ENCODE measurements at regions of chr1 and their contacts with region 1.

Region 1: DNA sequence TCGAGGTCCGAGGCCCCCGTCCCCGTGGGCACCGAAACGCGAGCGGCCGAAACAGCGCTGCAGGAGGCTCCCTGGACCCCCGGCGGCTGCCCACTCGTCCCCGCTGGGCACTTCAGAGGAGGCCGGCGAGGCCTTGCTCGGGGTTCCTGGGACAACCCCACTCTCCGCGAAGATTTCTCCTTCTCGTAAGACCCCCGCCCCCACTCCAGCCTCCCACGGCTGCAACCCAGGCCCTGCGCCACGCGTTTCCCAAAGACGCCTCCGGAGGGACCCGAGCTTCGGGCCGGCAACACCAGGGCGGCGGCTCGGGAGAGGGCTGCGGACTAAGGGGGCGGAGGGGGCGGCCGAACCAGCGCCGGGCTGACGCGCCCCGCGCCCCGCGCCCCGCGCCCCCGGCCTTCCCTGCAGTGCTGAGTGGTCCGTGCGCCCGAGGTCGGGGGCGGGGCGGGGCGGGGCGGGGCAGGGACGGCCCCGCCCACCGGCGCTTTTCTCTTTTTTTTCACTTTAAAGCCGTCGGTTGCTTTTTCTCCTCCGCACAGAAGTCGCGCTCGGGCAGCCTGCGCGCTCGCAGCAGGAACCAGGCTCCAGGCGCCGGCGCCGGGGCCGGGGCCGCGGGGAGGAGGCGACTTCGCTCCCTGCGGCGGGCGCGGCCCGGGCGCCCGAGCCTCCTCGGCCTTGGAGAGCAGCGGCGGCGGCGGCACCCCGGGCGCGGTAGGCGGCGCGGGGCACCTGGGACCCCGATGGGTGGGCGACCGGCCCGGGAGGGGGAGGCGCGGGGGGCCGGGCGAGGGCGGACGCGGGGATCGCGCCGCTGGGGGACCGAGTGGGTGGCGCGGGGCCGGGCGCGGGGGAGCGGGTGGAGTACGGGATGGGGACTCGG is at the start of gene SPSB1:
- DNase-seq: peak; percentile 37 to 54
- H3K4me3 ChIP-seq: peak within 1 kb of the TSS; percentile 83
- H3K27ac ChIP-seq: peak within 1 kb of the TSS; percentile 60; the same call in 1 of the 2 replicates
- H3K4me1 ChIP-seq: peaks cover 42% of the 10 kb centered on the region
- H3K27me3 ChIP-seq: no peaks in the 10 kb centered on the region
- CTCF ChIP-seq: no peak
- total RNA-seq, gene SPSB1: 27.9 and 33.8 TPM in 2 replicates

Region 2: GRCh38 chr1:9350013-9350908 is 57.7 kb after region 1 on chr1:
- CTCF ChIA-PET with region 1: no interaction called
- POLR2A ChIA-PET with region 1: no interaction called
- intact Hi-C with region 1: loop called (anchors 5 kb)
- DNase-seq: peak in 1 of 2 experiments; percentile 17
- H3K4me3 ChIP-seq: no peak overlapping the region
- H3K27ac ChIP-seq: no peak overlapping the region
- H3K4me1 ChIP-seq: peaks cover 26% of the 10 kb centered on the region
- H3K27me3 ChIP-seq: no peaks in the 10 kb centered on the region
- CTCF ChIP-seq: no peak

Region 3: DNA sequence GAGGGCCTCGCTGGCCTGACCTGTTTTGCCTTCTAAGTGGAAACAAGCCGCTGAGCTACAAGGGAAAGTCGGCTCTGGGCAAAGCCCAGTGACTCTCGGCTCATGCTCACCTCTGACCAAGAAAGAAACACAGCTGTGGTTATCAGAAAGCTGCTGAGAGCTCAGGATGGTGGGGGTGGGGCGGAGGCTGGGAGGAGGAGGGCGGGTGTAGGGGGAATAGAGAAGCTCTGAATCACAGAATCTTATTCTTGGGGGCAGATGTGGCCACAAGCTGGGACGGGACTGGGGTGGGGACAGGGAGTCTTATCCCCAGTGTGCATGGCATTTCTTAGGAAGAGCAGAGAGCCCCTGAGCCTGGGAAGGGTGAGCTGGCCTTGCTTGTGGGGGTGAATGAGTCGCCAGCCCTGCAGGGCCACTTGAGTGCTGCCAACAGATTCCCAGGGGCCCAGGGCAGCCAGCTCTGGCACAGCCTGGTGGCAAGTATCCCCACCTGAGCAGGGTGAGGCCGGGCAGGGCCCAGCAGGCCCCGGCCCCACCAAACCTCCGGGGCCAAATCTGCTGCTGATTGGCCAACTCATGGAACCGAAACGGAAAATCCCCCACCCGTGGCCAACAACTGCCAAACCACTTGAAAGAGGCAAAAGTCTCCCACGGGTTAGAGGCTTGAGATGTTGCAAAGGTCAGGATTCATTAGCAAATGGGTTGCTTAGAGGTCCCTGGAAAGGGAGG is 120.7 kb after region 1 on chr1:
- CTCF ChIA-PET with region 1: no interaction called
- POLR2A ChIA-PET with region 1: no interaction called
- intact Hi-C with region 1: loop called (anchors 5 kb)
- DNase-seq: peak; percentile 78 to 83
- H3K4me3 ChIP-seq: 0 out of 2 replicates have a peak overlapping the region, but pooled peaks have one; percentile 14
- H3K27ac ChIP-seq: peak overlapping the region; percentile 91
- H3K4me1 ChIP-seq: peaks cover 32% of the 10 kb centered on the region
- H3K27me3 ChIP-seq: no peaks in the 10 kb centered on the region
- CTCF ChIP-seq: no peak

Region 4: DNA sequence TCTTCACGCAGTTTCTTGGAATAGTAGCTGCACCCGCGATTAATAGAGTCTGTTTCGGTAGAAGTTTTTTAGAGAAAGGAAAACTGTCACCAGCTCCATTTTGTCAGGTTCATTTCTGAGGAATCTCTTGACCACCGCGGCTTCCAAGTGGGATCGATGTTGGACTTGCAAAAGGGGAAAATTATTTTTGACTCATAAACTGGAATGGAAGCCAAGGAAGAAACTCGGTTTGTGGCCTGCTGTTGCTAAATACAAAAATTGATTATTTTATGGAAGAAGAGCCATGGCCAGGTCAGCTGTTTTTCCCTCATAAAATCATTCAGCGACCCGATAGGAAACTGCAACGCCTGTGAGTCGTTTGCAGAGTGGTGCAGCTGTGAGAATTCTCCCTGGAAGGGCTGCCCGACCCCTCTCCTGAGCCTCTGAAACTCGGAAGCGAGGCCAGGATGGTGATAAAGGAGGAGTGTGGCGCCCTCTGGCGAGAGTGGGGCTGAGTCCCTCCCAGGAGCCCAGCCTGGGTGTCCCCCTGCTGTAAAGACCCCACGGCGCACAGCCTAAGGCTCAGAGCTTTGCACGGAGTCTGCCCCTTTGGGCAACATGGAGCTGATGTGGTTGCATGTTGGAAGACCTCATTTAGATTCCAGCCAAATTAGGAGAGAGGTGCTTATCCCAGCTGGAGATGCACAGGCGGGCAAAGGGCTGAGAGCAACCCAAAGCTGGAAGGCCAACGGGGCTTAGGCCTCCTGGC is 163.1 kb after region 1 on chr1:
- CTCF ChIA-PET with region 1: no interaction called
- POLR2A ChIA-PET with region 1: no interaction called
- intact Hi-C with region 1: loop called (anchors 1 kb)
- DNase-seq: peak in 1 of 2 experiments; percentile 34
- H3K4me3 ChIP-seq: no peak overlapping the region
- H3K27ac ChIP-seq: no peak overlapping the region
- H3K4me1 ChIP-seq: no peaks in the 10 kb centered on the region; the same call in 1 of the 2 replicates
- H3K27me3 ChIP-seq: no peaks in the 10 kb centered on the region
- CTCF ChIP-seq: peak; percentile 73

Region 5: DNA sequence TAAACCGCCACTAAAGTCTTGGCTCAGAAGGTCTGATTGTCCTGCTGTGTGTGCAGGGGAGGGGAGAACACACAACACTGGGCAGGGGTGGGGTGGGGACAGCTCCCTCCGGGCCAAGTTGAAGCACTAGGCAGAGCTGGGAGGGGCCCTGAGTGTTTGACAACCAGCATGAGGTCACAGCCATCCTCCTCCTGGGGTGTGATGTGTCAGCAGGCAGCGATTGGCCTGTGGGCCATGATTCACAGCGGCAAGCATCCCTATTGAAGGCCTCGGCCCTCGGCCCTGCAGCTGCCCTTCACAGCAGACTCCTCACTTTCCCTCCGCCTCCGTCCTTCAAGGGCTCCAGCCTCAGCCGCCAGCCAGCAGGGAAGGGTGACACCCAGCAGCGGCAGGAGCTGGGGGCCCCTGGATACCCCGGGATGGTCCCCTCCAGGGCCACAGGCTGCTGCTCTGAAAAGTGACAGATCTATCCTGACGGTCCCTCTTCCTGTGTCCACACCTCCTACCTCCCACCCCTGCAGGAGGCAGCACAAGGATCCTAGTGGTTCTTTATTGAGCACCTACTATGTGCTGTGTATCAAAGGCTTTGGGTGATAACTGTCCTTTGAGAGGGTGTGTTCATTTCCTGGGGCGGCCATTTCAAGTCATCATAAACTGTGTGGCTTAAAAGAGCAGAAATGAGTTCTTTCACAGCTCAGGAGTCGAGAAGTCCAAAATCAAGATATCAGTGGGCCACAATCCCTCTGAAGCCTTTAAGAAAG is 180.6 kb after region 1 on chr1:
- CTCF ChIA-PET with region 1: no interaction called
- POLR2A ChIA-PET with region 1: no interaction called
- intact Hi-C with region 1: loop called (anchors 5 kb)
- DNase-seq: peak; percentile 71 to 77
- H3K4me3 ChIP-seq: no peak overlapping the region
- H3K27ac ChIP-seq: no peak overlapping the region
- H3K4me1 ChIP-seq: peaks cover 15% of the 10 kb centered on the region; the same call in 1 of the 2 replicates
- H3K27me3 ChIP-seq: no peaks in the 10 kb centered on the region
- CTCF ChIP-seq: no peak

Region 6: GRCh38 chr1:9573723-9574122 is 281.1 kb after region 1 on chr1:
- CTCF ChIA-PET with region 1: no interaction called
- POLR2A ChIA-PET with region 1: no interaction called
- intact Hi-C with region 1: loop called (anchors 2 kb)
- DNase-seq: no peak
- H3K4me3 ChIP-seq: no peak overlapping the region
- H3K27ac ChIP-seq: no peak overlapping the region
- H3K4me1 ChIP-seq: no peaks in the 10 kb centered on the region
- H3K27me3 ChIP-seq: no peaks in the 10 kb centered on the region
- CTCF ChIP-seq: peak; percentile 66

Measured in PC-9 (cell line).